ENCODE measurements at regions of chr11 and their contacts with region 1.

Region 1: DNA sequence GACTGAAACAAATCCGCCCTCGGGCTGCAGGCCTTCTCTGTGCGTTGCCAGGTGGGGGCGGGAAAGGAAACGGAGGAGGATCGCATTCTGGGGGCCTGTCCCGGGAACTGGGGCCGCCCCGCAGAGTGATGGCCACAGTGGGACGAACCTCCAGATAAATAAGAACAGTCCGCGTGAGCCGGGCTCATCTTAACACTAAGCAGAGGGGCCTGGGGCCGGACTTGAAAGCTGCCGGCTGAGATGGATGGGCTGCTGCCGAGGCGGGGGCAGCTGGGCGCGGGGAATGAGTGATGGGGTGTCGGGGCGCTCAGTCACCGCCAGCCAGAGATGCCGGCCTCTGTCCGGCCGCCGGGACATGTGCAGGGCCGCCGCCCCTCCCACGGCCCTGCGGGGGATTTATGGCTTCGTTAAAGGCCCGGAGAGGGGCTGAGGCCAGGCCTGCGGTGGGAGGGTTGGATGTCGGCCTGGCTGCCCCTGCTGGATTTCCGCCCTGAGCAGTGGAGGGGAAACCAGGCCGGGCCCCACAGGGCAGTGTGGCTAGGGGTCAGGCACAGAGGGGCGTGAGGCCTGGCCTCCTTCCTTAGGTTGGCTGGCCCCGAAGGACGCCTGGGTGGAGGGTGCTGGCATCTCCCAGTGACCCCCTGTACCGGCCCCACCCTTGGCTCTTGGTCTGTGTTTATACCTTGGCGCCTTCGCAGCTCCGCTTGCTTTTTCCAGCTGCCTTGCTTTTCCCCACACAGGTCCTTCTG is 45.3 kb upstream of the CD82 start:
- DNase-seq: no peak
- ATAC-seq: no peak
- H3K4me3 Mint-ChIP-seq: no peak overlapping the region
- H3K27ac Mint-ChIP-seq: no peak overlapping the region
- H3K4me1 Mint-ChIP-seq: no peaks in the 10 kb centered on the region
- H3K27me3 Mint-ChIP-seq: peaks cover 30% of the 10 kb centered on the region
- CTCF ChIP-seq: no peak

Region 2: GRCh38 chr11:42840176-42840829 is 1679.9 kb before region 1 on chr11:
- CTCF ChIA-PET with region 1: no interaction called
- POLR2A ChIA-PET with region 1: no interaction called
- intact Hi-C with region 1: no loop called
- DNase-seq: no peak
- ATAC-seq: no peak
- H3K4me3 Mint-ChIP-seq: no peak overlapping the region
- H3K27ac Mint-ChIP-seq: no peak overlapping the region
- H3K4me1 Mint-ChIP-seq: no peaks in the 10 kb centered on the region
- H3K27me3 Mint-ChIP-seq: no peaks in the 10 kb centered on the region
- CTCF ChIP-seq: no peak

Region 3: GRCh38 chr11:44538375-44539054 is 18.4 kb after region 1 on chr11:
- CTCF ChIA-PET with region 1: interaction called, 23 read pairs
- POLR2A ChIA-PET with region 1: interaction called, 3 read pairs
- intact Hi-C with region 1: loop called (anchors 1 kb)
- DNase-seq: peak; percentile 67
- ATAC-seq: peak; percentile 97
- H3K4me3 Mint-ChIP-seq: no peak overlapping the region
- H3K27ac Mint-ChIP-seq: no peak overlapping the region
- H3K4me1 Mint-ChIP-seq: peaks cover 3% of the 10 kb centered on the region
- H3K27me3 Mint-ChIP-seq: peaks cover 19% of the 10 kb centered on the region
- CTCF ChIP-seq: peak; percentile 37

Region 4: DNA sequence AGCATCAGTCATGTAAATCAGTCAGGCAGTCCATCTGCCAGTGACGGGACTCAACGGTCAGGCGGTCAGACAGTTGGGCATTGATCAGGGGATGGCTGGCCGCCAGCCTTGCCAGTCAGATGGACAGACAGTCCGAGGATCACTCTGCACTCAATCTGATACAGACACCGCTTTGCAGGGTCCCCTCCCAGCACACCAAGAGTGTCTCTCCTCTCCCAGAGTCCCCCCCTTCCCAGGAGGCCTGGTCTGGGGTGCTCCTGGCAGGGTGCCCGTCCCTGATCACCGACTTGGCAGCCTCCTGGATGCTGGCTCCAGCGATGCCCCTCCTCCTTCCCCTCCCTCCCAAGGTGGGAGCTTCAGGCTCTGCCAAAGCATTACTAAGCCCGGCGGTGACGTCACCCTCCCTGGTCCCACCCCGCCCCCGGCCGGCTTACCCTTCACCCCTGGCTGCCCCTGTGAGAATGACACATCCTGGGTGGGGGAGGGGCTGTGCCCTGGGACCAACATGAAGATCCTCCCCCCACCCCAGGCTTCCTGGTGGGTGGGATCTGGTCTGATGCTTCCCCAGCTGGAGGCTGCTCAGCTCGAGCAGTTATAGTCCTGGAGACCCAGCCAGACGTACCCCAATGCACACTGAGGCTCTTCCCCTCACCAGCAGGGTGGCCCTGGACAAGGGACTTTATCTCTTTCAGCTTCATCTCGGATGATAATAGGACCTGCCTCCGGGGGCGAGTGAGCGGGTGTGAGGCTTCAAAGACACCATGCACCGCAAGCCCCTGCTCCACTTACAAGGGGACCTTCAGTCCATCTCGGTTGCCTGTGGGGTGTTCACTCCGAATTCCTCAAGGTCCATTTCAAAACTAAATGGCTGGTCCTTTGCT is 114.5 kb after region 1 on chr11:
- CTCF ChIA-PET with region 1: interaction called, 6 read pairs
- POLR2A ChIA-PET with region 1: no interaction called
- intact Hi-C with region 1: loop called (anchors 1 kb)
- DNase-seq: no peak
- ATAC-seq: peak; percentile 60
- H3K4me3 Mint-ChIP-seq: no peak overlapping the region
- H3K27ac Mint-ChIP-seq: no peak overlapping the region
- H3K4me1 Mint-ChIP-seq: peaks cover 7% of the 10 kb centered on the region
- H3K27me3 Mint-ChIP-seq: peaks cover 23% of the 10 kb centered on the region
- CTCF ChIP-seq: no peak

Region 5: DNA sequence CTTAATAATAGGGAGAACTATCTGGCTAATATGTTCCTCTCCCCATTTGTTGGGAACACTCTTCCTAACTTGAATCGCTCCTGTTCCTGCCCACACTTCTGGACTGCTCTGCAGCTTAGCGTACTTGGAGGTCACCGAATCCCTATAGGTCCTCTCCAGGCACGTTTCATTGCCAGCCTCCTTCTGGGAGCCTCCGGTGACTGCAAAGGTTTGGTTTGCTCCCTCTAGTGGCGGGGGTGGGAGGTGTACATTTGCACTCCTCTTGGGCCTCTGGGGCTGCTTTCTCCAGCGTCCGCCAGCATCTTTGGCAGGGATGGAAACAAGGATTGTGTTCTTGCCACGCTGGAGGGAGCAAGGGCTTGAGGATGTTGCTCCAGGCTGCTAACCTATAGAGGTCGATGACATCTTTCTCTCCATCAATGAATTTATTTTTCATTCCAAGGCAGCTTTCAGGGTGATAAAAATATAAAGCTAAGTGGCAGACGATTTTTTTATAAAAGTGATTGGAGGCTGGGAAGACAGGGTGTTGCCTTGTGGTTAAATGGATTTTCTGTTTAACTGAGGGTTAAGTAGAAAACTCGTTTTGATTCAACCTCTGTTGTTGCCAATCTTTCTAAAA is 255.3 kb after region 1 on chr11:
- CTCF ChIA-PET with region 1: interaction called, 17 read pairs
- POLR2A ChIA-PET with region 1: no interaction called
- intact Hi-C with region 1: loop called (anchors 1 kb)
- DNase-seq: peak; percentile 37
- ATAC-seq: peak; percentile 64
- H3K4me3 Mint-ChIP-seq: no peak overlapping the region
- H3K27ac Mint-ChIP-seq: peak overlapping the region; percentile 4
- H3K4me1 Mint-ChIP-seq: peaks cover 3% of the 10 kb centered on the region
- H3K27me3 Mint-ChIP-seq: no peaks in the 10 kb centered on the region
- CTCF ChIP-seq: peak; percentile 51

Region 6: GRCh38 chr11:44893846-44894617 is 373.9 kb after region 1 on chr11:
- CTCF ChIA-PET with region 1: no interaction called
- POLR2A ChIA-PET with region 1: no interaction called
- intact Hi-C with region 1: loop called (anchors 1 kb)
- DNase-seq: no peak
- ATAC-seq: peak; percentile 60
- H3K4me3 Mint-ChIP-seq: no peak overlapping the region
- H3K27ac Mint-ChIP-seq: no peak overlapping the region
- H3K4me1 Mint-ChIP-seq: no peaks in the 10 kb centered on the region
- H3K27me3 Mint-ChIP-seq: peaks cover 8% of the 10 kb centered on the region
- CTCF ChIP-seq: no peak

Measured in activated B cell treated with CpG ODN at 0.5 μM for 24 hours (primary cell).